Activated T-helper 1 cell treated with anti-CD3 and anti-CD28 coated beads, Interleukin-12 subunit alpha, Interleukin-12 subunit beta, Interleukin-2, Interleukin-4 antibody, amounts not matched to agents 30 ng/mL and 10 ng/mL and 1 ng/mL, durations not matched to agents 14 hours and 24 hours and 36 hours (primary cell): ENCODE measurements at regions of chr1 and their contacts with region 1.

Region 1: GRCh38 chr1:233440951-233441401 is 113.5 kb downstream of the MAP3K21 start:
- DNase-seq: no peak
- H3K4me3 Mint-ChIP-seq: no peak overlapping the region
- H3K27ac Mint-ChIP-seq: no peak overlapping the region
- H3K4me1 Mint-ChIP-seq: no peaks in the 10 kb centered on the region
- H3K27me3 Mint-ChIP-seq: peaks cover 5% of the 10 kb centered on the region

Region 2: GRCh38 chr1:233313434-233314155 is 127.4 kb before region 1 on chr1:
- intact Hi-C with region 1: no loop called
- DNase-seq: no peak
- H3K4me3 Mint-ChIP-seq: no peak overlapping the region
- H3K27ac Mint-ChIP-seq: no peak overlapping the region
- H3K4me1 Mint-ChIP-seq: no peaks in the 10 kb centered on the region
- H3K27me3 Mint-ChIP-seq: peaks cover 36% of the 10 kb centered on the region

Region 3: DNA sequence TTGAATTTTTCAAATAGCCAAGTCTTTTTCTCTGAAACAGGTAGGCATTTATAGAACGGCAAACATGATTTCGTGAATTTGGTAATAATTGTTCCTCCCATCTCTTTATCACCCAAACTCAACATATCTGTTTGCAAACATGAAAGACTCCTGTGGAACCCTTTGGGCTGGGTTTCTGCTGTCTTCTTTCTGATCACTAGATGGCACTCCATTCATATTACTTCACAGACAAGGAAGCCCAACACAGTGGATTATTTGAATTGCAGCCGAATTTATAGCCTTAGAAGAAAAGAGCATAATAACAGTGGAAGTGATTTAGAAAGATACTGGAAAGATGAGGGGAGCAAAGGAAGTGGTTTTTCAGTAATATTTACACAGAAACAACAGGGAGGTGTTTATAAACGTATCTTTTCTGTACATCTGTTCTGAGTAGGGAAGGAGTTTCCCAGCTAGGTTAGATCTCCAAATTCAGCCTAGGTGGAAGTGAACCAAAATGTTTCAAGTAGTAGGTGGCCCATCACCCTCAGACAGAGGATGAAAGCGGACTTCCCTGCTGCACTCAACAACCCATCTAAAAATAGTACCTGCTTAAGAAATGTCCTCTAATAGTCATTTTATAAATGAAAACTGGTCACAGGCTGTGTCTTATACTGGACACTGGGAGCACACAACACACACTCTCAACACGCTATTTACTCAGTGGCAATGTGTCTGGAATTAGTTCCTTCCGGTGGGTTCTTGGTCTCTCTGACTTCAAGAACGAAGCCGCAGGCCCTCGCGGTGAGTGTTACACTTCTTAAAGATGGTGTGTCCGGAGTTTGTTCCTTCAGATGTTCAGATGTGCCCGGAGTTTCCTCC is 45.9 kb before region 1 on chr1:
- intact Hi-C with region 1: loop called (anchors 1 kb)
- DNase-seq: peak; percentile 17
- H3K4me3 Mint-ChIP-seq: no peak overlapping the region
- H3K27ac Mint-ChIP-seq: no peak overlapping the region
- H3K4me1 Mint-ChIP-seq: no peaks in the 10 kb centered on the region
- H3K27me3 Mint-ChIP-seq: peaks cover 8% of the 10 kb centered on the region

Region 4: DNA sequence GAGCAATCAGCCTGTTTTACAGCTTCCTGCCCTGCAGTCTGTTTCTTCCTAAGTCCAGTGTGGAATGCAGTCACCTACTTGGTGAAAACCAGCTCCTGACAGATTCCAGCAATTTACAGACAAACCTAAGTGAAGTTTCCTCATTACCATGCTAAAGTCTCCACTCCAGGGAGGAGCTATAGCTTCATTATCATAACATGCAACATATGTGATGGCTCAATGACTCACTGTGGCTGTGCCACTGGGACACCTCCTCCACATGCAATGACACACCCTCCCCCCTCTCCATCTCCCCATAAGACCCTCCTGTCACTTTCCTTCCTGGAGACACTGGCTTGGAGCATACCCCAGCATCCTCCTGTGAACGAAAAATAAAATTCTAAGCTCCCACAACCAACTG is 11.7 kb after region 1 on chr1:
- intact Hi-C with region 1: no loop called
- DNase-seq: no peak
- H3K4me3 Mint-ChIP-seq: no peak overlapping the region
- H3K27ac Mint-ChIP-seq: no peak overlapping the region
- H3K4me1 Mint-ChIP-seq: no peaks in the 10 kb centered on the region
- H3K27me3 Mint-ChIP-seq: peaks cover 10% of the 10 kb centered on the region

Region 5: DNA sequence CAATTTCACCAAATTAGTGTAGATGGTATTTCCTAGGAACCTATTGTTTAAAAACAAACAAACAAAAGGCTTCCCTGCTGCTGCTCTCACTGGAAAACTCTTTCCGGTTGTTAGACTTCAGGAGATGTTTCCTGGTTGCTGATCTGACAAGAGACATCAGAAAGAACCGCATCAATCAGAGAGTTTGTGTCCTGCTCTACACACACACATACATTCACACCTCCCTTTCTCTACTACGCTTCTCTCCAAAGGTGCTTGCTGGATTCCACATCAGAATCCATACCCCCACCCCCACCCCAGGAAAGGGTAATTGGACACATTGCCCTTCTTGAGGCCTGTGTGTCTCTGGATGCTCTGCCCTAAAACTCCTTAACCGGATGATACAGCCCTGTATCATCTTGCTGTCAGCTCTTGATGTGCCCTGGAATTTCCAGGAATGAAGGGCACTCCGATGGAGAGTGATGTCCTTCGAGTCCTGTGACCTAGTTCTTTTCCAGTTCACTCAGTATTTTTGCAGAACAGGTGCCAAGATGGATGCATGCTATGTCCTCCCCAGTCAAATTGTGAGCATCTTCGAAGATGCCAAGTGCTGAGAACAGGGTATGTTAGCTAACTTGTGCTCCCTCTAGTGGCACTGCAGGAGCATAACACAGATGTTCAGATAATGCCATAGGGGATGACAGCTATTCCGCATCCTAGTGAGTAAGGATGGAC is 349.8 kb after region 1 on chr1:
- intact Hi-C with region 1: loop called (anchors 1 kb)
- DNase-seq: peak; percentile 8
- H3K4me3 Mint-ChIP-seq: no peak overlapping the region
- H3K27ac Mint-ChIP-seq: no peak overlapping the region
- H3K4me1 Mint-ChIP-seq: no peaks in the 10 kb centered on the region
- H3K27me3 Mint-ChIP-seq: peaks cover 4% of the 10 kb centered on the region

Region 6: DNA sequence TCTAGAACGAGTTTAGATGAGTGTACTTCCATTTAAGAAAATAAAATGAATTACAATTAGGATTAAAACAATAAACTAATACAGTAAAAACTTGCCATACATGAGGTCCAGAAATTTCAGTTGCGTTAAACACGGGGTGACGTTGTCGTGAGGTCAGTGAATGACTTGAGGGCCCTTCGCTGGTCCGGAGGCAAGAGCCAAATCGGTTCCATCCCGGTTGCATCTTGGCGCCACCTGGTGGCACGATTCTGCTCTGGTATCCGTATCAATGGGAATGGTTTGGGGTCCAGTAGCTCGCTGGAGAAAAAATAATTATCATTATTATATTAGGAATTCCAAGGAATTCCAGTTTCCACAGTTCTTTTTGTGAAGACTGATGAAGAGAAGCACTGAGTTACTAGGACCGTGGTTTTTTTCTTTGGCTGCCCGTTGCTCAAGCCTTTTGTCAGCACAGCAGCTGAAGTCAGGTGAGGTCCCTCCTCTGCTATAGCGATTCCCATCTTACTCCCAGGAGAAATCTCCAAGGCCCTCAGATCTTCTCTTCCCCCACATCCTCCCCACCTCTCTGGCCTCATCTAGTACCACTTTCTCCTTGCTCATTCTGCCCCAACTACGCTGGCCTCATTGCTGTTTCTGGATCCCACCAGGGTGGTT is 624.9 kb after region 1 on chr1:
- intact Hi-C with region 1: loop called (anchors 1 kb)
- DNase-seq: peak; percentile 40
- H3K4me3 Mint-ChIP-seq: no peak overlapping the region
- H3K27ac Mint-ChIP-seq: no peak overlapping the region
- H3K4me1 Mint-ChIP-seq: no peaks in the 10 kb centered on the region
- H3K27me3 Mint-ChIP-seq: peaks cover 6% of the 10 kb centered on the region